ENCODE measurements at regions of chr7 and their contacts with region 1.

Region 1: DNA sequence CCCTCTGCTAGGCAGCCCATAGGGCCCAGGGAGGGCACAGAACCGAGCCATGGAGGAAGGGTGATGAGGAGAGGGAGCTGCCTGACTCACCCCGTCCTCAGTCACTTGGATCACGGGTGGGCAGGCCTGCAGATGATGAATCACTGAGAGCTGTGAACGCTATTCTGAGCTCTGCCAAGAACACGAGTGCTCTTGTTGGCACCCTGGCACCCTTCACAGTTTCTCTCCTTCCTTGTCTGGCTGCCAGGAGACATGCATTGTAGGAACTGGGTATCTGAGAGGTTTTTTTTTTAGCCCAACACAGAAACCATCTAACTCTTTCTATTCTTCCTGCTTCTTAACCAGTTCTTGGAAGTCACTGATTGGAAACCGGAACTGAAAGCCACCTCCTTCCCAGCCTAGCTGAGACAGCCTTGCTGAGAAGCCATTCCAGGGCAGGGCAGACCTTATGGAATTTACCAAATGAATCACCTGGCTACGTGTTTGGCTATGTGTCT is 82.1 kb downstream of the SLC37A3 start:
- DNase-seq: peak; percentile 73
- H3K4me3 ChIP-seq: peak overlapping the region; percentile 10
- H3K27ac ChIP-seq: peak overlapping the region; percentile 82
- H3K4me1 ChIP-seq: peaks cover 5% of the 10 kb centered on the region
- H3K27me3 ChIP-seq: no peaks in the 10 kb centered on the region
- CTCF ChIP-seq: no peak

Region 2: DNA sequence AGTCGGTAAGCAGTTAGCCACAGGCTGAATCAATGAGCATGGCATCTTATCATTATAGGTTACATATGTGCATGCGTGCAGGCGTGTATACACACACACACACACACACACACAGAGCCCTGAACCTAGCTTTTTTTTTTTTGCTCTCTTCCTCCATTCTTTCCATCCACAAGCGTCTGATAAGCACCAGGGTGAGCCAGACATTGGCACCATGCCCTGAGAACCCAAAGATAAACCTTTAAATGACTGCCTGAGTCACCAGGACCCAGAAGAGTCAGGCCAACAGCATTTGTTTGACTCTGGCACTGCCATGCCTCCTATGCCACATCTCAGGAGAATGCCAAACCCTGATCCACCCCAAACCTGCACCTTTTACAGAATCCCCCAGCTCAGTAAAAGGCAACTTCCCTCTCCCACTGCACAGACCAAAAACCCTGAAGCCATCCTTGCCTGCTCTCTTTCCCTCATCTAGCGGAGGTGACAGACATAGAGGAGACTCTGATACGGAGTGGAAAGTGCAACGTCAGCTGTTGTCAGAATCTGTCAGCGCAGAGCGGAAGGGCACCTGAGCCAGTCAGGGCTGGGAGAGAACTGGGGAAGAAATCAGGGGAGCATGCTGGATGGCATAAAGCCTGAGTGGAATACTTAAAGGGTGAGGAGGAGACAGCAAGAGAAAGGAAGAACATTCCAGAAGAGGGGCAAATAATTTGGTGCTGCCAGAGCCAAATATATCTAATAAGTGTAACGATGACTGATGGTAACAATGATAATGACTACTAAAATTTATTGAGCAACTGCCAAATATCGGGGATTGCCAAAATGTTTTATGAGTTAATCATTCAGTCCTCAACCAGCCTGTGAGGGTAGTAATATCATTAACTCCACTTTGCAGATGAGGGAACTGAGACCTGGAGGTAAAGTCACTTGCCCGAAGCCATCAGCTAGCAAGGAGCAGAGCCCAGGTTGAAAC is 256.7 kb before region 1 on chr7:
- intact Hi-C with region 1: loop called (anchors 10 kb)
- DNase-seq: peak; percentile 94
- H3K4me3 ChIP-seq: no peak overlapping the region
- H3K27ac ChIP-seq: peak overlapping the region; percentile 70
- H3K4me1 ChIP-seq: peaks cover 11% of the 10 kb centered on the region
- H3K27me3 ChIP-seq: no peaks in the 10 kb centered on the region
- CTCF ChIP-seq: no peak